ENCODE measurements at regions of chr2 and their contacts with region 1.

Region 1: GRCh38 chr2:239264838-239265651 is 135.8 kb downstream of the HDAC4 start:
- DNase-seq: peak in 1 of 2 donors; percentile 32
- H3K4me3 ChIP-seq: peak overlapping the region in 1 of 3 donors; percentile 26
- H3K27ac ChIP-seq: peak overlapping the region; percentile 68 to 74
- H3K4me1 ChIP-seq: peaks cover 12 to 32% of the 10 kb centered on the region in 2 donors
- H3K27me3 ChIP-seq: no peaks in the 10 kb centered on the region
- CTCF ChIP-seq: no peak
- POLR2A ChIP-seq: no peak

Region 2: DNA sequence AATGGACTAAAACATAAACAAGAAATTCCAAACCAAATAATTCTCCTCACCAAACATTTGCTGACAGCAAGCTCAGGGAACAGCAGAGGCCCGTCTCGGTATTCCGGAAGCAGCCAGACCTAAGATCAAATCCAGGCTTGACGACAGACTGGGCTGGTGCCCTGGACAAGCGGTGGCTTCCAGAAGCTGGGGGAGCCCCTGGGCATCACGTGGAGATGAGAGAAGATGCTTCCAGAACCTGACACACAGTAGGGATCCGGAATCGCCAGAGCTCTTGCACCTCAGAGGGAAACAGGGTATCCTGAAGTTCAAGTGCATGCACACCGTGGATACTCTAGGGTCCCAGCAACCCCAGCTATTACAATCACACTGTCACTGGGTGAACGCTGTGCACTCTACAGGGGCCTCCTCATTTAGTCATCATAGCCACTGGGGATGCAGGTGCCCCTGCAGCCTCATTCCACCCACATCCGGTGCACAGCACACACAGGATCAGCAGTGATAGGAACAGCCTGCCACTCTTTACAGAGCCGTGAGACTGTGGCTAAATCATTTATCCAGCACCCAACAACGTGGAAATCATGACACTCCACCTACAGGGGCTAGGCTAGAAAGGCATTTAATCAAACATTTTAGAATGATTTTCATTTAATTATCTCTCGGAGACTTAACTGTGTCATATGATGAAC is 33.2 kb after region 1 on chr2:
- intact Hi-C with region 1: loop called (anchors 1 kb)
- DNase-seq: peak in 1 of 2 donors; percentile 27
- H3K4me3 ChIP-seq: no peak overlapping the region
- H3K27ac ChIP-seq: no peak overlapping the region
- H3K4me1 ChIP-seq: no peaks in the 10 kb centered on the region
- H3K27me3 ChIP-seq: no peaks in the 10 kb centered on the region
- CTCF ChIP-seq: no peak
- POLR2A ChIP-seq: no peak